Breast epithelium (tissue), 4 donors: ENCODE measurements at regions of chr6 and their contacts with region 1.

Region 1: GRCh38 chr6:66277400-66277799 is 570.4 kb upstream of the EYS start:
- DNase-seq: no peak
- H3K4me3 ChIP-seq: no peak overlapping the region
- H3K27ac ChIP-seq: no peak overlapping the region
- H3K4me1 ChIP-seq: no peaks in the 10 kb centered on the region
- H3K27me3 ChIP-seq: no peaks in the 10 kb centered on the region
- CTCF ChIP-seq: no peak
- POLR2A ChIP-seq: no peak

Region 2: GRCh38 chr6:67068781-67069180 is 791.4 kb after region 1 on chr6:
- intact Hi-C with region 1: loop called (anchors 5 kb)
- DNase-seq: no peak
- H3K4me3 ChIP-seq: no peak overlapping the region
- H3K27ac ChIP-seq: no peak overlapping the region
- H3K4me1 ChIP-seq: no peaks in the 10 kb centered on the region
- H3K27me3 ChIP-seq: no peaks in the 10 kb centered on the region
- CTCF ChIP-seq: no peak
- POLR2A ChIP-seq: no peak